ENCODE measurements at regions of chr1 and their contacts with region 1.

Region 1: DNA sequence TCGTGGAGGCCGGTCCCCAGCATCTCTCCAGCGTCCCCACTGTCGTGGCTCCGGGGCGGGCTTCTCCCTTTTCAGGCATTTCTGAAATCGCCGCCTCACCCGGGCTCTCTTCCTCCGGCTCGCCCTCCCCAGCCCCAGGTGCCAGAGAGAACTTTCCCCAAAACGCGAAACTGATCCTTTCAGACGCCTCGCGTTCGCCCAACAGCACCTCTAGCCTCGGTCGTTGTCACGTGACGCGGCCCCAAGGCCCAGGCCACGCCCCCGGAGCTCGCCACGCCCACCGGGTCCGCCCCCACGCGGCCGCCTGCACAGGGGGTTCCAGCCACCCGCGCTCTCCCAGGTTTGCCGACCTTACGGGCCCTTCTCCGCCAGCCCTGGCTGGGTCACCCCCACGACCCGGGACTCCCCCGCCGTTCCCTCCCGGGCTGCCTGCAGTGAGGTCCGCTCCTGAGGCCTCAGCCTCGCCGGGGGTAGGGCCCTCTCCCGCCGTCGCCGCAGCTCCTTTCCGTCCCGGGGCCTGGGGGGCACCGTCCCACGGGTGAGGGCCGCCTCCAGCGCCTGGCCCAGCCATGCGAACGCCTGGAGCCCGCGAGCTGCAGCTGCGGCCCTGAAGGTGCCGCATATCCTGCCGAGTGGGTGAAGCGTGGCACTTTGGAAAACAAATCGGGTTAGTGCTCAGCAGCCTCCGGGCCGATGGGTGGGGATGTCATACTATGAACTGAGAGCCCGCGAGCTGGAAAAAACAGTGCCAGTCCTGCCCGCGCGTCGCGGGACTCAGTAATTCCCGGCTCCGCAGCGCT is 21.0 kb downstream of the H3-3A start:
- DNase-seq: peak; percentile 89
- H3K4me3 Mint-ChIP-seq: peak overlapping the region; percentile 84
- H3K27ac Mint-ChIP-seq: no peak overlapping the region
- H3K4me1 Mint-ChIP-seq: peaks cover 8% of the 10 kb centered on the region
- H3K27me3 Mint-ChIP-seq: no peaks in the 10 kb centered on the region

Region 2: DNA sequence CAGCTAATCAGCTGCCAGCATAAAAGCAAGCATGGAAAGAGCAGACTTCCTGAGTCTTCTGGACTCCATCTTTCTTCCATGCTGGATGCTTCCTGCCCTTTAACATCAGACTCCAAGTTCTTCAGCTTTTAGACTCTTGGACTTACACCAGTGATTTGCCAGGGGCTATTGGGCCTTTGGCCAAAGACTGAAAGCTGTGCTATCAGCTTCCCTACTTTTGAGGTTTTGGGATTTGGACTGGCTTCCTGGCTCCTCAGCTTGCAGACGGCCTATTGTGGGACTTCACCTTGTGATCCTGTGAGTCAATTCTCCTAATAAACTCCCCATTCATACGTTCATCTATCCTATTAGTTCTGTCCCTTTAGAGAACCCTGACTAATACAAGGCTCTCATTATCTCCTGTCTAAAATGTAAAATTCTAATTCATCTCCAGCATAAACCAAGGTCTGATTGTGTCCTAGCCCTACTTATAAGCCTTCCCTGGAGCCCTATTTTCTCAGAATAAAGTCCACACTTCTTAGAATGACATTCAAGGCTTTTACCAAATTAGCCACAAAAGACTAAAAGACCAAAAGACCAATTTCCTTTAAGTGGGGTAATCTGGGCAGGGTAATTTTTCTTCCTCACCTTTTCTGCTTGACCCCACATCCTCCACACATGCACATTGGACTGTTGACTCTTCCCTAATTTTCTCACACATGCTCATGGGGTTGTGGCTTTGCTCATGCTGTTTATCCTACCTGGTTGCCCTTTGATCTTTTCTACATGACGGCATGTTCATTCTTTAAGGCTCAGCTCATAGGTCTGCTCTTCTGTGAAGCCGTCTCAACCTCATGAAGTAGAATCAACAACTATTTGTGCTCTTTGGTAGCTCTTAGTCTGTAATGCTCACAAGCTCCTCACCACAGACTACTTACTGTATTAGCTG is 412.4 kb before region 1 on chr1:
- CTCF ChIA-PET with region 1: no interaction called
- intact Hi-C with region 1: no loop called
- DNase-seq: no peak
- H3K4me3 Mint-ChIP-seq: no peak overlapping the region
- H3K27ac Mint-ChIP-seq: no peak overlapping the region
- H3K4me1 Mint-ChIP-seq: no peaks in the 10 kb centered on the region
- H3K27me3 Mint-ChIP-seq: peaks cover 5% of the 10 kb centered on the region

Region 3: DNA sequence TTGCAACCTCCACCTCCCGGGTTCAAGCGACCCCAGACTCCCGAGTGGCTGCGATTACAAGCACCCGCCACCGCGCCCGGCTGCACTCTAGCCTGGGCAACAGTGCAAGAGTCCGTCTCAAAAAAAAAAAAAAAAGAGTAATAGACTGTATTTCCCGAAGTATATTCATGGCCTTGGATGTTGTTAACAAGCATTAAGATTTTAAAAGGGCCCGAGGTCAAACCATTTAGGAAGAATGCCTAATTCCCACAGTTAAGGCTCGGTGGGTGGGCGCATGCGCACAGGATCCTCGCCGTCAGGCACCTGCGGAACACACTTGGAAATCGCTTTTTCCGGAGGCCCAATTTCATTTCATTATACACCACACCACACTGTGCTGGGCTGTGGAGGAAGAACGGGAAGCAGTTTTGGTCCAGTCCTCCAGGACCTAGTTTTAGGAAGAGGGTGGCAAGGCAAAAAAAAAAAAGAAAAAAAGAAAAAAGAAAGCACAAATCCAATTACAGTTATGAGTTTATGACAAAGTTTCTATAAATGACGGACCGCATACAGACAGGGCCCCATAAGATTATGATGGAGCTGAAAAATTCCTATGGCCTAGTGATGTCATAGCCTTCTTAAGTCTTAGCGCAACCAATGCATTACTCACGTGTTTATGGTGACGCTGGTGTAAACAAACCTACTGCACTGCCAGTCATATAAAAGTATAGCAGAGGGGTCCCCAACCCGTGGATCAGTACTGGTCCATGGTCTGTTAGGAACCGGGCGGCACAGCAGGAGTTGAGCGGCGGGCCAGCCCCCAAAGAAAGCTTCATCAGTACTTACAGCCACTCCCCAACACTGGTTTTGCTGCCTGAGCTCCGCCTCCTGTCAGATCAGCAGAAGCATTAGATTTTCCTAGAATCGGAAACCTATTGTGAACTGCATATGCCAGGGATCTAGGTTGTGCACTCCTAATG is 17.2 kb after region 1 on chr1:
- CTCF ChIA-PET with region 1: interaction called, 3 read pairs
- intact Hi-C with region 1: loop called (anchors 2 kb)
- DNase-seq: peak; percentile 43
- H3K4me3 Mint-ChIP-seq: peak overlapping the region; percentile 79
- H3K27ac Mint-ChIP-seq: no peak overlapping the region
- H3K4me1 Mint-ChIP-seq: peaks cover 13% of the 10 kb centered on the region
- H3K27me3 Mint-ChIP-seq: peaks cover 2% of the 10 kb centered on the region

Region 4: GRCh38 chr1:226109829-226110248 is 26.3 kb after region 1 on chr1:
- CTCF ChIA-PET with region 1: interaction called, 3 read pairs
- intact Hi-C with region 1: loop called (anchors 1 kb)
- DNase-seq: peak; percentile 85
- H3K4me3 Mint-ChIP-seq: peak overlapping the region; percentile 76
- H3K27ac Mint-ChIP-seq: peak overlapping the region; percentile 43
- H3K4me1 Mint-ChIP-seq: peaks cover 7% of the 10 kb centered on the region
- H3K27me3 Mint-ChIP-seq: no peaks in the 10 kb centered on the region

Measured in activated naive CD4-positive, alpha-beta T cell treated with anti-CD3 and anti-CD28 coated beads for 36 hours (primary cell).